Pancreas (tissue), 10 donors: ENCODE measurements at regions of chr10 and their contacts with region 1.

Region 1: GRCh38 chr10:75099952-75100763 is 11.3 kb upstream of the SAMD8 start:
- DNase-seq: peak; percentile 60 to 96 (median 84)
- ATAC-seq: peak; percentile 88 to 99 (median 96)
- H3K4me3 ChIP-seq: no peak overlapping the region
- H3K27ac ChIP-seq: no peak overlapping the region
- H3K4me1 ChIP-seq: no peaks in the 10 kb centered on the region
- H3K27me3 ChIP-seq: no peaks in the 10 kb centered on the region
- CTCF ChIP-seq: peak; percentile 98 to 99 (median 98)

Region 2: DNA sequence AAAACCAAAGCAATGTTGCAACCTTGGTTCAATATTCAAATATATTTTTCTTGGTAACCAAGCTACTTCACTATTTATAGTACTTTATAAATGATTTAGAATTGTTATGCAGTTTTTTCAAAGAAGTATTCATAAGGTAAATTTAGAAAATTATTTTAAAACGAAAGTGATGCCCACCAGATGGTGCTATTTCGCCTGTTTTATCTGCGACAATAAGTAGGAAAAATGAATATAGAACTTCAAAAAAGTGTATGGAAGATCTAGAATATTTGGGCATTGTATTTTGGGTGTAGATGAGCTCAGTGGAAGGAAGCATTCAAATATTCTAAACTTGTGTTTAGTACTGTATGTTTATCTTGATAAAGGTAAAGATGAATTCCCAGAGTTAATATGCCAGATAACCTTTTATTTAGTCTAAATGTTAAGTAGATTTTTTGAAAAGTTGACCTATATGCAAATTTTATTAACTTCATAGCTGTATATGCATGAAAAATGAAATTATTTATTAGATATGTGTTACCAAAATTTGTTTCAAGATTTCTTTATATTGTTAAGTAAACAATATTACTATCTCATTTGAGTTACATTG is 856.0 kb before region 1 on chr10:
- intact Hi-C with region 1: loop called in 2 of 3 experiments (anchors 5 kb)
- DNase-seq: no peak
- ATAC-seq: peak in 1 of 4 donors; percentile 19
- H3K4me3 ChIP-seq: no peak overlapping the region
- H3K27ac ChIP-seq: no peak overlapping the region
- H3K4me1 ChIP-seq: no peaks in the 10 kb centered on the region
- H3K27me3 ChIP-seq: no peaks in the 10 kb centered on the region
- CTCF ChIP-seq: peak in 2 of 4 donors; percentile 21 to 25

Region 3: GRCh38 chr10:74249865-74250264 is 850.3 kb before region 1 on chr10:
- intact Hi-C with region 1: loop called in 1 of 3 experiments (anchors 5 kb)
- DNase-seq: no peak
- ATAC-seq: no peak
- H3K4me3 ChIP-seq: no peak overlapping the region
- H3K27ac ChIP-seq: no peak overlapping the region
- H3K4me1 ChIP-seq: peaks cover 2 to 9% (median 9%) of the 10 kb centered on the region in 3 donors
- H3K27me3 ChIP-seq: no peaks in the 10 kb centered on the region
- CTCF ChIP-seq: no peak

Region 4: DNA sequence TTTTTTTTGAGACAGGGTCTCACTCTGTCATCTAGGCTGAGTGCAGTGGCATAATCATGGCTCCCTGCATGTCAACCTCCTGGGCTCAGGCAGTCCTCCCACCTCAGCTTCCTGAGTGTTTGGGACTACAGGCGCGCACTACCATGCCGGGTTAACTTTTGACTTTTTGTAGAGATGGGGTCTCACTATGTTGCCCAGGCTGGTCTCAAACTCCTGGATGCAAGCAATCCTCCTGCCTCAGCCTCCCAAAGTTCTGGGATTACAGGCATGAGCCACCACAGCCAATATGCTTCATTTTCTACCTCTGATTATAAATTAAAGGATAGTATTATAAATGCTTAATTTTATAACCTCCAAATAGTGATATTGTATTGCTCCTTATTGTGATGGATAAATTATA is 827.9 kb before region 1 on chr10:
- intact Hi-C with region 1: loop called in 1 of 3 experiments (anchors 5 kb)
- DNase-seq: no peak
- ATAC-seq: no peak
- H3K4me3 ChIP-seq: no peak overlapping the region
- H3K27ac ChIP-seq: no peak overlapping the region
- H3K4me1 ChIP-seq: peaks cover 0 to 11% (median 10%) of the 10 kb centered on the region in 3 donors
- H3K27me3 ChIP-seq: no peaks in the 10 kb centered on the region
- CTCF ChIP-seq: no peak

Region 5: DNA sequence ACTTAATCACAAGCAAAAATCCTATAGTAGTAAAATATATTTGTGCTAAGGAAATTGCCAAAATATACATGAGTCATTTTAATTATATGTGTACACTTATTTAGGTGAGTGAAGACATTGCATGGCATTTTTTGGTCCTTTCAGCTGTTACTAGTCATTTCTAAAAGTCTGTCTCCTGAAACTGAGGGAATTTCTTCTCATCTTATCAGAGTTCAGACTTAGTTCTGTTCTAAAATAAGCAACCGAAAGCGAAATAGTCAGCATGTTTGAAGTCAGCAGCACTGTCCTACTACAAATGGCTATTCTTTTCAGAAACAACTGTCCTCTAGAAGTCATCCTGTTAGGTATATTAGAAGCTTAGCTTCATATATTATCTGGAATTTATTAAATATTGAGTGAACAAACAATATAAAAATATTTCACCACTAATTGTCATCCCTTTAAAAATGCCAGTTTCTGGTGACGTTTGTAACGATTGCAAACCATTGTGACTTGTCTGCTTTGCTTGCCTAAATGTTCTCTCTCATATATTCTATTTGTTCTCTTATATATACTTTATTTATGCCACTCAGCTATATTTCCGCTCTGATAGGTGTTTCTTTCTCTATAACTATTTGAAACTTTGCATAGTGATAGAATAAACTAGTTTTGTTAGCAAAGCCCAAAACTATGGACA is 501.1 kb before region 1 on chr10:
- intact Hi-C with region 1: no loop called
- DNase-seq: no peak
- ATAC-seq: peak in 3 of 4 donors; percentile 53 to 88 (median 70)
- H3K4me3 ChIP-seq: no peak overlapping the region
- H3K27ac ChIP-seq: peak overlapping the region in 1 of 4 donors; percentile 37
- H3K4me1 ChIP-seq: peaks cover 4 to 7% (median 6%) of the 10 kb centered on the region in 3 donors
- H3K27me3 ChIP-seq: no peaks in the 10 kb centered on the region
- CTCF ChIP-seq: no peak